Left lung (tissue), 14 donors: ENCODE measurements at regions of chr16 and their contacts with region 1.

Region 1: DNA sequence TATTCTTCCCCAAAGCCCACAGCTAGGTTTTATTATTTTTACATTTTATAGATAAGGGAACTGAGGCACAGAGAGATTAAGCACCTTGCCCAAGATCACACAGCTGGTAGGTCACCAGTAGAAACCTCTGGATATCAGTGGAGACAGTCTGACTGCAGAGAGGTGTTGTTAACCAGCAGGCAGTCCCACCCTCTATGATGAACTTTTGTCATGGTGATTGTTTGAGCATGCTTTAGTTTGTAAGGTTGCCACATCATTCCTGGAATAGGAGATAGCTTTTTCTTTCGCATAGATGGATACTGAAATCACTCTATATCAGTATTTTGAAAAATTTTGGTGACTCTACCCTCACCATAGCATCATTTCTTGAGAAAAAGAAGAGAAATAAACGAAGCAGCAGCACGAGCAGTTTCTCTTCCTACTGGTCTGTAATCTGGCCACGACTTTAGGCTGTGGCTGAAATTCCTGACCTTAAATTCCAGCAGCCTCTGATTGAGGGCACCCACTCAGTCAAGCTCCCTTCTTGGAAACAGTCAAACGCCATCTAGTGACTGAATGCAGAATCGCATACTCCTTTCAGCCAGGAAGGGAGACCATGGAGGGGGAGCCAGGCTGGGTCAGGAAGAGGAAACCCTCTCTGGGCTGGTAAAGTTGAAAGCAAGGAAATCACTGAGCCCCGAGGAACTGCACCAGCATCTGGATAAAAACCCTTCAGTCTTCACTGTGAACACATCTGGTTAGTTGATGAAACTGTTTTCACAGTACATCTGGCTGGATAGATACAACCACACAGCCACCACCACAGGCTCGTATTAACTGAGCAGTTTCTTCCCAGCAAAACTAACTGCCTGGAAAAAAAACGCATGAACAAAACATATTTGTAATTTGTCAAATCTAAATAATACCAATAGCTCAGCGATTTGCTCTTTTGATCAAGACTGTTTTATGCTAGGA is 108.4 kb upstream of the XYLT1 start:
- DNase-seq: peak in 2 of 4 donors; percentile 46 to 70
- ATAC-seq: peak; percentile 94
- H3K4me3 ChIP-seq: no peak overlapping the region
- H3K27ac ChIP-seq: no peak overlapping the region
- H3K4me1 ChIP-seq: peaks cover 0 to 7% of the 10 kb centered on the region in 2 donors
- H3K27me3 ChIP-seq: no peaks in the 10 kb centered on the region
- CTCF ChIP-seq: peak; percentile 84 to 89

Region 2: GRCh38 chr16:16861546-16861945 is 717.7 kb before region 1 on chr16:
- intact Hi-C with region 1: loop called in 1 of 2 experiments (anchors 10 kb)
- DNase-seq: peak in 3 of 4 donors; percentile 35 to 59 (median 36)
- ATAC-seq: peak; percentile 62
- H3K4me3 ChIP-seq: no peak overlapping the region
- H3K27ac ChIP-seq: no peak overlapping the region
- H3K4me1 ChIP-seq: no peaks in the 10 kb centered on the region
- H3K27me3 ChIP-seq: peaks cover 0 to 26% of the 10 kb centered on the region in 2 donors
- CTCF ChIP-seq: peak; percentile 60 to 75